ENCODE measurements at regions of chr9 and their contacts with region 1.

Region 1: DNA sequence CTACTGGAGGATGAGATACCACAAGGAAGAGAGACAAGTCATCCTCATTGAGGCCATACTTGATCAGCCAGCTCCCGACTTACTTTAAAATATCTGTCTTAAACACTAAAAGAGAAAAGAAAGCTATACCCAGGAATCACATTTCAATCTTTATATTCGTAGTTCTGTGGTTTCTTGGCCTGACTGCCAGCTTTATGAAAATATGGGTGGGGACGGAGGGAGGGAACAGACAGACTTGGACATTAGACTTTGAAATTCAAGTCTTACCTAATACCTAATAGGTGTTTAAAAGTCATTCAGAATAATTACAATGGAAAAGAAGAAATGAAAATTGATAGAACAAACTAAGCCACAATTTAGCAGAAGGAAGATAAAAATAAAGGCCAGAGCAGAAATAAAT is 604.8 kb upstream of the RORB start:
- DNase-seq: no peak
- H3K4me3 Mint-ChIP-seq: no peak overlapping the region
- H3K27ac Mint-ChIP-seq: no peak overlapping the region
- H3K4me1 Mint-ChIP-seq: no peaks in the 10 kb centered on the region
- H3K27me3 Mint-ChIP-seq: no peaks in the 10 kb centered on the region

Region 2: GRCh38 chr9:73116031-73116430 is 776.3 kb before region 1 on chr9:
- intact Hi-C with region 1: no loop called
- DNase-seq: no peak
- H3K4me3 Mint-ChIP-seq: no peak overlapping the region
- H3K27ac Mint-ChIP-seq: no peak overlapping the region
- H3K4me1 Mint-ChIP-seq: peaks cover 28% of the 10 kb centered on the region
- H3K27me3 Mint-ChIP-seq: peaks cover 2% of the 10 kb centered on the region

Region 3: DNA sequence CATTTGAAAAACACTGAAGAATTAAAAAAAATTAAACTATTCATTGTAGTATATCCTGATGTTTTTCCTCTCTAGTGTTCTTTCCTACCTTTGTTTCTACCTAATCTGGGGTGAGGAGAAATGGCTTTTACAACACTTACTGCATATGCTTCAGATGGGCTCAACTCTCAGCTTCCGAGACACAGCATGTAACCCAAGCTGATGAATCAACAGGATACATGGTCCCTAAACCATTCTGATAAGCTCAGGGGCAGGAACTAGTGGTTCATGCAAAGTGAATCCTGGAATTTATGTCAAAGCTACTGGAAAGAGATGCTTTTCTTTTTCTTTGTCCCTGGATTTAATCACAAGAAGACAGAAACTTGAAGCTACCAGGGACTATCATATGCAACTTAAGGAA is 67.7 kb before region 1 on chr9:
- intact Hi-C with region 1: loop called (anchors 10 kb)
- DNase-seq: no peak
- H3K4me3 Mint-ChIP-seq: no peak overlapping the region
- H3K27ac Mint-ChIP-seq: no peak overlapping the region
- H3K4me1 Mint-ChIP-seq: no peaks in the 10 kb centered on the region
- H3K27me3 Mint-ChIP-seq: no peaks in the 10 kb centered on the region

Region 4: GRCh38 chr9:74016004-74016403 is 123.7 kb after region 1 on chr9:
- intact Hi-C with region 1: no loop called
- DNase-seq: no peak
- H3K4me3 Mint-ChIP-seq: no peak overlapping the region
- H3K27ac Mint-ChIP-seq: no peak overlapping the region
- H3K4me1 Mint-ChIP-seq: no peaks in the 10 kb centered on the region
- H3K27me3 Mint-ChIP-seq: no peaks in the 10 kb centered on the region

Measured in activated CD4-positive, alpha-beta T cell treated with anti-CD3 and anti-CD28 coated beads, Interleukin-2, amount 10 ng/mL, durations not matched to agents 24 days and 14 days (primary cell).